Heart left ventricle (tissue), 16 donors: ENCODE measurements at regions of chr5 and their contacts with region 1.

Region 1: DNA sequence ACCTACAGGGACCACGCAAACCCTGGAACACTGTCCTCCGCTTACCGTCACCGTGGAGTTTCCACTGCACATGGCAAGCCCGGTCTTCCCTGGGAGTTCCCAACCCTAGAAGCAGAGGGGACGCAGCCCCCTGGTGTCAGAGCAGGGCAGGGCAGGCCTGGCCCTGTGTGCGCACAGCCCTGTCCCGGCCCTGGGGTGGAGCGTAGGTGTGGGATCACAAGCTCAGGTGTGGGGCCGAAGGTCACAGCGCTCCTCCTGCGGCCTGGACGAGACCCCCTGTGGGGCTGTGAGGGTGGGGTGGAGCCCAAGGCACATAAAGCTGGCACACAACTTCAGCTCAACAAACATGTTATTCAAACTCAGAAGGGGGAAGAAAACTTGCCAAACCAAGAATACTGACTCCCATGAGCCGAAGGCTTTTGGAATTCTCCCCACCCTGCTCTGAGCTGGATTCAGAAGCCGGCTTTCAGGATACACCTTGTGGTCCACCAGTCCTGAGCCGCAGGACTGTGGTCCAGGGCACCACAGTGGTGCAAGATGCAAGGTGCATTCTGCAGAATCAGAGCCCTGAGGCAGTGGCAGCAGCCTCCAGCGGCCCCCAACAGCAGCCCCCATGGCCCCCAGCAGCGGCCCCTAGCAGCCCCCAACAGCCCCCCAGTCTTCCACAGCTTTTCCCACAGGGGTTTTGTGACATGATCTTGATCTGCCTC is 11.8 kb upstream of the EXOC3 start:
- DNase-seq: peak in 1 of 5 donors; percentile 62
- ATAC-seq: peak; percentile 64 to 86 (median 73)
- H3K4me3 ChIP-seq: no peak overlapping the region
- H3K27ac ChIP-seq: no peak overlapping the region
- H3K4me1 ChIP-seq: no peaks in the 10 kb centered on the region
- H3K27me3 ChIP-seq: peaks cover 0 to 15% (median 0%) of the 10 kb centered on the region in 9 donors
- CTCF ChIP-seq: peak; percentile 33 to 67 (median 52)
- POLR2A ChIP-seq: no peak

Region 2: GRCh38 chr5:321230-321725 is 109.9 kb before region 1 on chr5 and contains the start of gene AHRR:
- intact Hi-C with region 1: loop called in 1 of 10 experiments (anchors 10 kb)
- DNase-seq: peak in 4 of 5 donors; percentile 41 to 58 (median 56)
- ATAC-seq: peak in 3 of 4 donors; percentile 60 to 87 (median 64)
- H3K4me3 ChIP-seq: peak within 1 kb of the TSS; percentile 33 to 66 (median 52)
- H3K27ac ChIP-seq: no peak within 1 kb of the TSS
- H3K4me1 ChIP-seq: peaks cover 6 to 25% (median 14%) of the 10 kb centered on the region in 12 donors
- H3K27me3 ChIP-seq: peaks cover 18 to 57% (median 39%) of the 10 kb centered on the region in 9 donors
- CTCF ChIP-seq: peak in 11 of 12 donors; percentile 19 to 63 (median 42)
- POLR2A ChIP-seq: no peak
- total RNA-seq, gene AHRR: 0.12 to 0.69 (median 0.29) TPM in 7 of 9 donors, not detected in the others

Region 3: GRCh38 chr5:849651-850301 is 418.6 kb after region 1 on chr5:
- intact Hi-C with region 1: no loop called
- DNase-seq: peak in 4 of 5 donors; percentile 46 to 74 (median 47)
- ATAC-seq: peak; percentile 58 to 88 (median 88)
- H3K4me3 ChIP-seq: peak overlapping the region in 9 of 12 donors; percentile 11 to 42 (median 32)
- H3K27ac ChIP-seq: peak overlapping the region in 5 of 12 donors; percentile 10 to 47 (median 22)
- H3K4me1 ChIP-seq: peaks cover 0 to 11% (median 0%) of the 10 kb centered on the region in 12 donors
- H3K27me3 ChIP-seq: peaks cover 0 to 17% (median 0%) of the 10 kb centered on the region in 9 donors
- CTCF ChIP-seq: no peak
- POLR2A ChIP-seq: no peak